Left ventricle myocardium superior (tissue), 1 donor: ENCODE measurements at regions of chr6 and their contacts with region 1.

Region 1: DNA sequence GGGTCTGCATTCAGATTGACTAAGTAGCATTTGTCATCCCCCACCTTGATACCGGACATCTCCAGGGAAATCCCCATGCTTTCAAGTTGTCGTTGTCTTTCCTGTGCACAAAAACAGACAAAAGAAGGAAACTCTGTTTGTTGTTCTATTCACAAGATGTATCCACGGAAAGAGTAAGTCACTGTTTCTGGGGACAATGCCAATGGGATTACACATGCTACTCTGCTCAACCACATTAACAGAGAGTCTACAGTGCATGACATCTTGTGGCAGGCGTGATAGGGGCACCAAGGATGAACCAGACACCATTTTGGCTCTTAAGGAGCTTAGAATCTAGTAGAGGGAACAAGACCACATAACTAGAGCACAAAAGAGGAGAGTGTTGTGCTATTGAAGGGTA is 124.4 kb upstream of the NUP153 start:
- DNase-seq: no peak
- ATAC-seq: peak; percentile 79

Region 2: GRCh38 chr6:17867880-17868279 is 36.7 kb after region 1 on chr6:
- intact Hi-C with region 1: no loop called
- DNase-seq: no peak
- ATAC-seq: peak; percentile 35

Region 3: GRCh38 chr6:18122124-18123093 is 291.3 kb after region 1 on chr6 and contains the start of gene NHLRC1:
- intact Hi-C with region 1: loop called (anchors 10 kb)
- DNase-seq: peak; percentile 95
- ATAC-seq: peak; percentile 99
- total RNA-seq, gene NHLRC1: 1.3 TPM